Panc1 (cell line): ENCODE measurements at regions of chr6 and their contacts with region 1.

Region 1: GRCh38 chr6:143940011-143940597 is 68.0 kb downstream of the PLAGL1 start:
- DNase-seq: peak; percentile 28
- ATAC-seq: peak; percentile 64; the same call in 1 of the 2 replicates
- H3K4me3 ChIP-seq: no peak overlapping the region
- H3K27ac ChIP-seq: no peak overlapping the region
- H3K4me1 ChIP-seq: no peaks in the 10 kb centered on the region
- H3K27me3 ChIP-seq: peaks cover 7% of the 10 kb centered on the region; the same call in 1 of the 2 replicates
- CTCF ChIP-seq: peak; percentile 87

Region 2: DNA sequence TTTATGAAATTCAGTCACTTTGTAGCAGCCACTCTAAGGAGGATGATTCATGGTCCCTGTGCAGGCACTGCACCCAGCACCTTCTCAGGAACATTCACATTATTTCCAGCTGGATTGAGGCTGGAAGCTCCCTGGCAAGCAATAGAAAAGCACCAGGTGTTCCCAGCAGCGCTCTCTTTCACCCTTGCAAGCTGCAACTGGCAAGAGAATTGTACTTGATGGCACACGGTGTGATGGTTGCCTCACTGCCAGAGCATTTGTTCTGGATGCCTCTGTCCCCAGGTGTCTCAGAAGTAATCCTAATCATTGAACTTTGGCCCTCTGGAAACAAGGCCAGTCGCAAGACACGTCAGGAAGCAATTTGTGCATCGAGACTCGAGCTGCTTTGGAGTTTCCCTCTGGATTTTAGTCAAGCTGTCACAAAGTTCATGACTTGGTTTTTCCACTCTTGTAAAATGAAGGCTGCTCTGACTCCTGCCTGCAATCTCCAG is 287.2 kb before region 1 on chr6:
- CTCF ChIA-PET with region 1: interaction called, 12 read pairs
- POLR2A ChIA-PET with region 1: no interaction called
- in situ Hi-C with region 1: no loop called
- intact Hi-C with region 1: no loop called
- DNase-seq: no peak
- ATAC-seq: peak; percentile 26; the same call in 1 of the 2 replicates
- H3K4me3 ChIP-seq: no peak overlapping the region
- H3K27ac ChIP-seq: peak overlapping the region; percentile 7; the same call in 1 of the 2 replicates
- H3K4me1 ChIP-seq: 0 out of 2 replicates have a peak, but pooled peaks cover 7% of the 10 kb centered on the region
- H3K27me3 ChIP-seq: no peaks in the 10 kb centered on the region
- CTCF ChIP-seq: no peak

Region 3: DNA sequence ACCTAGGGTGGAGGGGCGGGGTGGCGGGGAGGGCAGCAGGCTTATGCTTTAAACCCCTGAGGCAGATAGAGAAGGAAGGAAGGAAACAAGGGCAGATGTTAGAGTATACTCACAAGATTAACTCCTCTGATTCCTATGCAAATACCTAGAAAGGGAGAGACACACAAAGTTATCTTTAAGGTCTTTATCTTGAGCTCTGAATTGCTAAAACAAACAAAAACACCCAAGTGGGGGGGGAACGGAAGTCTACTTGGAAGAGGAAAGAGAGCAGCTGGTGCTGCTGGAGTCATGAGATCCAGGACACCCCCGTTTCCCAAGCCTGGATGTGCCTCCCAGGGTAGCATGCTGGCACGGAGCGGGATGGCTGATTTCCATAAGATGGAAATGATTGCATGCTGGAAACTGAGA is 24.6 kb after region 1 on chr6:
- CTCF ChIA-PET with region 1: interaction called, 11 read pairs
- POLR2A ChIA-PET with region 1: no interaction called
- in situ Hi-C with region 1: no loop called
- intact Hi-C with region 1: no loop called
- DNase-seq: no peak
- ATAC-seq: no peak
- H3K4me3 ChIP-seq: no peak overlapping the region
- H3K27ac ChIP-seq: no peak overlapping the region
- H3K4me1 ChIP-seq: no peaks in the 10 kb centered on the region
- H3K27me3 ChIP-seq: peaks cover 2% of the 10 kb centered on the region; the same call in 1 of the 2 replicates
- CTCF ChIP-seq: no peak

Region 4: DNA sequence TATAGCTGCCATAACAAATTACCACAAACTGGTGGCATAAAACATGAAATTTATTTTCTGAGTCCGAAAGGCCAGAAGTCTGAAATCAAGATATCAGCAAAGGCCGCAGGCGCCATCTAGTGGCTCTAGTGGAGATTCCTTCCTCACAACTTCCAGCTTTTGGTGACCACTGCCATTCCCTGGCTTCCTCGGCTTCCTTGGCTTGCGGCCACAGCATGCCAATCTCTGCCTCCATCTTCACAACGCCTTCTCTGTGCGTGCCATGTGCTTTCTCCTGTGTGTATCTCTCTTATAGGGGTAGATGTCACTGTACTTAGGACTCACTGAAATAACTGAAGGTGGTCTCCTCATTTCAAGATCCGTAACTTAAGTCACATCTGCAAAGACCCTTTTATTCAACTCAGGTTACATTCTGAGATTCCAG is 73.4 kb after region 1 on chr6:
- CTCF ChIA-PET with region 1: interaction called, 10 read pairs
- POLR2A ChIA-PET with region 1: no interaction called
- in situ Hi-C with region 1: no loop called
- intact Hi-C with region 1: loop called (anchors 1 kb)
- DNase-seq: peak; percentile 36
- ATAC-seq: peak; percentile 85
- H3K4me3 ChIP-seq: no peak overlapping the region
- H3K27ac ChIP-seq: no peak overlapping the region
- H3K4me1 ChIP-seq: no peaks in the 10 kb centered on the region
- H3K27me3 ChIP-seq: peaks cover 7% of the 10 kb centered on the region
- CTCF ChIP-seq: peak; percentile 95